ENCODE measurements at regions of chr14 and their contacts with region 1.

Region 1: DNA sequence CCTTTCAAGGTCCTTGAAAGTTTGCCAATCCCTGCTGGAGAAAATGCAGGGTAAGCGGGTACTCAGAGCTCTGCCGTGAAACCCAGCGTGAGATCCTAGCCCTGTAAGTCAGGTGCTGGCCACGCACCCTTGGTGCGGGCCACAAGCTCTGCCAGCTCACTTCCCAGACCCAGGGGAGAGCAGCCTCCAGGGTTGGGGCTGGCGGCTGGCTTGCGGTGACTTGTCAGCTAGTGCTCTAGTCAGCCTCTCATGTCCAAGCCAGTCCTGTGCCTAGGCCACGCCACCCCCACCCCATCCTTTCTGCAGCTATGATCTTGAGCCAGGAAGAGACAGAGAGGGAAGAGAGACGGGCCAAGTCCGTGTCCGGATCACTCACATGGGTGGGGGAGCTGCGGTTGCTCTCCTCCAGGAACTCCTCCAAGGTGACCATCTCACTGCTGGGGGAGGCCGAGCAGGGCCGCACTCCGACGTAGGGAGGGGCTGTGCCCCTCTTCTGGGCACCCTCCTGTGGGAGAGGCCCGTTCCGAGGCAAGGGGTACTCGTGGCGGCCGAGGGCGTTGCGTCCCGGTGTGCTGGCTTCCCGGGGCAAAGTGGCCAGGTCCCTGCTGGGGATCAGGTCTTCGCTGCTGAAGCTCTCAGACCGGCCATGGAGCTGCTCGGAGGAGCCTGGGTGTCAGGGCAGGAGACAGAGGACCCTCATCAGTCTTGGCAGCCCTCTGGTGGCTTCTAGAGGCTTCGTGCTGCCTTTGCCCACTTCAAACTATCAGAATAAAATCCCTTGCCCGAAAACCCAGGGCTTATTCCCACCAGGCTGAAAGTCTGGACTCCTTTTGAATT is 33.3 kb upstream of the GPR68 start:
- DNase-seq: no peak
- H3K4me3 ChIP-seq: no peak overlapping the region
- H3K27ac ChIP-seq: no peak overlapping the region
- H3K27me3 ChIP-seq: no peaks in the 10 kb centered on the region
- CTCF ChIP-seq: no peak

Region 2: DNA sequence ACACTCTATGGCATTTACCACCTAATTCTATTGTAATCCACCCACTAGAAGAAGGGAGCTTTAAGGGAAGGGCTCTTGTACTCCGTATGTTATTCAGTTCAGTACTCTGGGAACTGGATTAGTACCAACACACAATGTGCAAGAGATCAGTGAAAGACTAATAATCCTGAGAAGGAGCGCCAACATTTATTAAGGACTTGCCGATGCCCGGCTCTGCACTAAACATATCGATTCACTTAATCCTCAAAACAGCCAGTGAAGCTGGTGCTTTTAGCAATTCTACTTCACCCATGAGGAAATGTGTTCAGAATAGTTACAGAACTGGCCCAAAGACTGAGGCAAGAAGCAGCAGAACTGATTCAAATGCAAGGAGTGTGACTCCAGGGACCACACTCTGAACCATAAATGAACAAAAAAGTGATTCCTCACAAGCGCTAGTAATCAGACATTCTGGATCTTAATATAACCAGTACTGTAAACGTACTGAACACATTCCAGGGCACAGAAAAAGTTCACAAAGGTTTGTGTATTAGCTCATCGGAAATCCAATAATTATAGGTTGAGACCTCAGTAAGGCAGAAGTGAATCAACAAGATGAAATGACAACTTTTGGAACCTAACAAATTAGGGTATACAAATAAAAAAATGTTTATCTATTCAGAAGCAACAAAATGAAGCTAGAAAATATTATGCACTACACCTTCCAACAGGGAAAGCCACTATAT is 298.1 kb before region 1 on chr14:
- CTCF ChIA-PET with region 1: no interaction called
- POLR2A ChIA-PET with region 1: no interaction called
- DNase-seq: no peak
- H3K4me3 ChIP-seq: no peak overlapping the region
- H3K27ac ChIP-seq: no peak overlapping the region
- H3K27me3 ChIP-seq: no peaks in the 10 kb centered on the region
- CTCF ChIP-seq: no peak

Region 3: GRCh38 chr14:91264151-91265150 is 13.3 kb before region 1 on chr14:
- CTCF ChIA-PET with region 1: interaction called, 11 read pairs
- POLR2A ChIA-PET with region 1: no interaction called
- DNase-seq: no peak
- H3K4me3 ChIP-seq: peak overlapping the region; percentile 29
- H3K27ac ChIP-seq: no peak overlapping the region
- H3K27me3 ChIP-seq: peaks cover 18% of the 10 kb centered on the region
- CTCF ChIP-seq: no peak

Measured in AG04450 (cell line).